ENCODE measurements at regions of chr15 and their contacts with region 1.

Region 1: DNA sequence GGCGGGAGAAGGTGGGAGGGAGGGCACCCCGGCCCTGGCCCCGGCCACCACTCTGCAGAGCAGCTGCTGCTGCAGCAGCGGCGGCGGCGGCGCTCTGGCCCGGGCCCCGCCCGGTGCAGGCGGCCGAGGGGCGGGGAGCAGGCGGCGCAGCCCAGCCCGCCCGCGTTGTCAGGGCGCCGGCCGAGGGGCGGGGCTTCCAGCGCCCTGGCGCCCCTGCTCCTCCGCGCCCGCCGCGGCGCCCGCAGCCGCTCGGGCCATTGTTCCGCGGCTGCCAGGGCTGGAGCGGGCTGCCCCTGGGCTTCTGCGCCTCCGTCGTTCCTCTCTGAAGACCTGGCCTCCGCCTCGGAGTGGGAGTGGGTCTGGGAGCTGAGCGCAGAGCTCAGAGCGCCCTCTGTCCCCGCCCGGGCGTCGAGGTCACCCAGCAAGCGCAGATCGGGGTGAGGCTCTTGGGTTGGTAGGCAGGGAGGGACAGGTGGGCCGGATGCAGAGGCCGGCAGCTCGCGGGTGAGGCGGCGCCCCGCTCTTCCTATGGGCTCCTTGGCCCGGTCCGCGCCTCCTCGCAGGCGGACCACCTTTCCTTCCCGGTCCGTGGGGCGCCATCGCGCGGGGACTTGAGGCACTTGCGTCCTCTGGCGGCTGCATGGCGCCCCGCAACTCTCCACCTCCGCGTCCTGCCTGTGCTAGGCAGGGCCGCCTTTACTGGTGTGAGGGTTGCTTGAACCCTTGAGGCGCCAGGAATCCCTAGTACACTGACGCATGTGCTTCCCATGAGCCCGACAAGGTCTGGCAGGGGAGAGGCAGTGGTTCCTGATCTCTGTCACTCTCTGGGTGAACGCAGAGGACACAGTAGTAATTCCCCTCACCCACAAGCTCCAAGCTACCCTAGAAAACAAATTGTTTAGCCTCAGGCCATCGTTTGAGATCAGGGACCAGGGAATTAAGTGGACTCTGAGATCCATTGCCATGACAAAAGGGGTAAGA is at the start of gene LPCAT4:
- DNase-seq: peak; percentile 87 to 96
- ATAC-seq: peak; percentile 87 to 90
- H3K4me3 ChIP-seq: peak within 1 kb of the TSS; percentile 97
- H3K27ac ChIP-seq: peak within 1 kb of the TSS; percentile 89 to 97
- H3K4me1 ChIP-seq: peaks cover 22% of the 10 kb centered on the region
- CTCF ChIP-seq: peak; percentile 99
- EP300 ChIP-seq: no peak
- POLR2A ChIP-seq: peak; percentile 90
- RAD21 ChIP-seq: peak; percentile 75 to 93
- polyA plus RNA-seq, gene LPCAT4: 42.9 and 50.7 TPM in 2 replicates

Region 2: DNA sequence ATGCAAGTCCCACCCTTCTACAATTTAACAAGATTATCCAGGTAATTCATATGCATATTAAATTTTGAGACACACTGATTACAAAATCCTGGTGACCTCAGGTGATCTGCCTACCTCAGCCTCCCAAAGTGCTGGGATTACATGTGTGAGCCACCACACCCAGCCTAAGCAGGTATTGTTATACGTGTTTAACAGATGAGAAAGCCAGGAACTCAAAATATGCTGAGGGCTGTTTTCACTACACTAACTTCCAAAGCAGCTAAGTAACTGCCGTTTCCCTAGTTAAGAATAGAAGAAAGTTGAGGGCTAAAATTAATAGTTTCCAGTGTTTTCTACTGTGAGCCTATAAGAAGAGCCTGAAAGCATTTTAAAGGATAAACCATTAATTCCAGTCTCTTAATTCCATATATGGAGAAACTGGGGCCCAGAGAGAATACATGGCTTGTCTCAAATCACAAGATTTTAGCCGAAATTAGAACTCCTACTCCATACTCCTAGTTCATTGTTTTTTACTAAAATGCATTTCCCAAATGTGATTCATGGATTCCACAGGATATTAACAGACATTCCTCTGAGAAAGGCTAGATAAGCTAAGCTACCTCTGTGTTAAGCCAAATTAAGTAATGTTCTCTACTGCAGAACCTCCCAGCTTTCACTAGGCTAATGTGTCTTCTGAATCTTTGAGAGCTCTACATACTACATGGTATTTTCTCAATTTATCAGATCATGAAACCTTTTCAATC is 311.4 kb before region 1 on chr15:
- CTCF ChIA-PET with region 1: interaction called, 13 read pairs
- POLR2A ChIA-PET with region 1: no interaction called
- DNase-seq: no peak
- ATAC-seq: peak; percentile 60 to 76; a peak in 5 of 6 replicates
- H3K4me3 ChIP-seq: no peak overlapping the region
- H3K27ac ChIP-seq: no peak overlapping the region
- H3K4me1 ChIP-seq: 0 out of 3 replicates have a peak, but pooled peaks cover 4% of the 10 kb centered on the region
- CTCF ChIP-seq: no peak
- EP300 ChIP-seq: no peak
- POLR2A ChIP-seq: no peak
- RAD21 ChIP-seq: no peak

Region 3: DNA sequence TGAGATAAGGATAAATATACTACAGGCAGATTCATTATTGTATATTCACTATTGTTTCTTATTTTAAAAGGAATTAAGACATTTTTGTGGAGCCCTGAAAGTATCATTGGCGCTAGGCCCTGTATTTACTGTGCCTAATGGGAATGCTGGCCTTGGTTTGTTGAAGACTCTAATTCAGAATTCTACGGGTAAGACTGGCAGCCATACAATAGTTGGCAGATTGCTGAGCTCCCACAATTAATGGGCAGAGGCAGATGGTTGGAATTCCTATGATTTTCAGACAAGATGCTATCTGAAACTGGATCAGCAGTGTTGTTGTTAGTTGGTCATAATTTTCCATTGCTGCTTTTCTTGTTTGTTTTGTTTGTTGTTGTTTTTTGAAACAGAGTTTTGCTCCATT is 250.8 kb before region 1 on chr15:
- CTCF ChIA-PET with region 1: interaction called, 11 read pairs
- POLR2A ChIA-PET with region 1: no interaction called
- DNase-seq: no peak
- ATAC-seq: no peak
- H3K4me3 ChIP-seq: no peak overlapping the region
- H3K27ac ChIP-seq: no peak overlapping the region
- H3K4me1 ChIP-seq: no peaks in the 10 kb centered on the region
- CTCF ChIP-seq: no peak
- EP300 ChIP-seq: no peak
- POLR2A ChIP-seq: no peak
- RAD21 ChIP-seq: no peak

Region 4: GRCh38 chr15:34217587-34218225 is 149.7 kb before region 1 on chr15:
- CTCF ChIA-PET with region 1: interaction called, 23 read pairs
- POLR2A ChIA-PET with region 1: no interaction called
- DNase-seq: no peak
- ATAC-seq: peak in 1 of 2 experiments; percentile 36; a peak in 3 of 6 replicates
- H3K4me3 ChIP-seq: no peak overlapping the region
- H3K27ac ChIP-seq: no peak overlapping the region
- H3K4me1 ChIP-seq: no peaks in the 10 kb centered on the region
- CTCF ChIP-seq: no peak
- EP300 ChIP-seq: no peak
- POLR2A ChIP-seq: no peak
- RAD21 ChIP-seq: no peak

Region 5: DNA sequence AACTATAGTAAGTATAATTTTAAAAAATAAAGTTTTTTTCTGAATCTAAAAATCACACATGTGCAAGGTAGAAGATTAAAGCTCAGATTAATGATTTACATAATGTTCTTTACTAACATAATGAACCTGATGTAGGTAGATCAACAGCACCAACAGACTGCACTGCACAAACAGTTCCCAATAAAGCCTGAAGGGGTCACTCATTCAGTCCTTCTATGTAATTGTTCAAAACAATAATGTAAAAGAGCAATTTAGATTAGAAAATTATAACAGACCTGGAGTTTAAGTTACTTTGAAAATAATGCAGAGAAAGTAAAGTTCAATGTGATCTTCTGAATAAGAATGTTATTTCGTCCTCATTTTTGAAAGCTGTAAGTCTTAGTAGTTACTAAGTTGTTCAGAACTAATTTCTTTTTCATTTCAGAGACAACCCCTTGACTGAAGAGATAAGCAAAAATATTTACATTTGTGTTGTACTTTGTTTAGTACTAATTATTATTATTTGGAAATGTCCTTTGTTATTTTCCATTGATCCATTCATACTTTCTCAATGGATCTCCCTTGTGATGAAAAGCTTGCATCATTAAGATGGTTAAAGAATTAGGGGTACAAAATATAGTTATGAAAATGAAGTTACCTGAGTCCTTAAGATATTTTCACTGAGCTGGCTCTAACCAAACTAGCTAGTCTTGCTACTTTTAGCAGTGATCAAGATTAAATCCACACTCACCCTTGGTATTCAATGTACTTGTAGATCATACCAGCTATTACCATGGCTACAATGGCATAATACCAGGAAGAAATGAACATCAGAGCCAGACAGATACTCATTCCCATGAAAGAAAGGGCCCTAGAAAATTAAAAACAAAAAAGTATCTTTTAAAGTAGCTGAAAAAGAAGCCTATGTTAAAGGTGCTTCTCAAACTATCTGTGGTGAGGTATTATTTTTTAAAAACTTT is 125.7 kb before region 1 on chr15:
- CTCF ChIA-PET with region 1: interaction called, 33 read pairs
- POLR2A ChIA-PET with region 1: no interaction called
- DNase-seq: peak; percentile 58 to 75
- ATAC-seq: peak; percentile 65 to 90; a peak in 3 of 6 replicates
- H3K4me3 ChIP-seq: no peak overlapping the region
- H3K27ac ChIP-seq: no peak overlapping the region
- H3K4me1 ChIP-seq: peaks cover 17% of the 10 kb centered on the region; the same call in 2 of the 3 replicates
- CTCF ChIP-seq: peak; percentile 67
- EP300 ChIP-seq: no peak
- POLR2A ChIP-seq: no peak
- RAD21 ChIP-seq: peak; percentile 62 to 66

Region 6: GRCh38 chr15:34327906-34328305 is 39.5 kb before region 1 on chr15:
- CTCF ChIA-PET with region 1: interaction called, 28 read pairs
- POLR2A ChIA-PET with region 1: no interaction called
- DNase-seq: no peak
- ATAC-seq: no peak
- H3K4me3 ChIP-seq: no peak overlapping the region
- H3K27ac ChIP-seq: no peak overlapping the region
- H3K4me1 ChIP-seq: no peaks in the 10 kb centered on the region
- CTCF ChIP-seq: no peak
- EP300 ChIP-seq: no peak
- POLR2A ChIP-seq: no peak
- RAD21 ChIP-seq: no peak

Region 7: DNA sequence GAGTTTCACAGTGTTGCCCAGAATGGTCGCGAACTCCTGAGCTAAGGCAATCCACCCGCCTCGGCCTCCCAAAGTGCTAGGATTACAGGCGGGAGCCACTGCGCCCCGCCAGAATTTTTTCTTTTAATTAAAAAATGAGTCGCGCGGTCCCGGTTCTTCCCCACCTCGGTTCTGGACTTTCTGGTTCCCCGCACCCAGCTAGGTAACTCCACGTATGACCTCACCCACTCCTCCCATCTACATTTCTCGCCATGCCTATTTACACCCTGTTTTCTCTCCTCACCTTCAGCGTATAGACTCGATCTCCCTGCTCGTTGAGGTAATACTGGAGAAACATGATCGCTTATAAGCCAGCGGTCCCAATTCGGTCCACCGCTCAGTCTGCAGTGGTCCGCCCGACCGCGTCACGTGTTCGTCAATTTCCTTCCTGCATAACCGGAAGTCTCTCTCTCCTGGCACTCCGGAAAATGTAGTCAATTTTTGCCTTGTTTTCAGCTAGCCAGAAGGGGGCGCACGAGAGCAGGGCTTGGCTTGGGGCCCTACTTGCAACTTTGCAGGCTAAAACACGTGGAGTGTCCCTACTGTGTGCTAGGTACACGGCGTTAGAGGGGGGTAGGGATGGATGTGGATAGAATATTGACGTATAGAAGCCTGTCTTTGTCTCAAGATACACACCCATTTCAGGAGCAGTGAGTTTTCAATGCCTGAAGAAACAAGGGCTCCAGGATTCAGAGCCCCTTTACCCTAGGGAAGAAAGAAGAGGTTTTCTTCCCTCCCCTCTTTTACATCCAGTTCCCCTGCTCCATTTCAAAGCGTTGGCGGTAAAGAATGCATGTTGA is 24.4 kb before region 1 on chr15 and contains the starts of genes NOP10 and NUTM1:
- CTCF ChIA-PET with region 1: interaction called, 80 read pairs
- POLR2A ChIA-PET with region 1: interaction called, 20 read pairs
- DNase-seq: peak; percentile 83 to 96
- ATAC-seq: peak; percentile 93 to 94
- H3K4me3 ChIP-seq: peak within 1 kb of the TSS; percentile 68
- H3K27ac ChIP-seq: peak within 1 kb of the TSS; percentile 82 to 88
- H3K4me1 ChIP-seq: peaks cover 15% of the 10 kb centered on the region; the same call in 2 of the 3 replicates
- CTCF ChIP-seq: peak; percentile 99
- EP300 ChIP-seq: no peak
- POLR2A ChIP-seq: peak; percentile 96
- RAD21 ChIP-seq: peak; percentile 84 to 87
- polyA plus RNA-seq, gene NOP10: 451 and 688 TPM in 2 replicates
- polyA plus RNA-seq, gene NUTM1: not detected in 2 replicates

Region 8: GRCh38 chr15:34470091-34470490 is 102.7 kb after region 1 on chr15:
- CTCF ChIA-PET with region 1: no interaction called
- POLR2A ChIA-PET with region 1: no interaction called
- DNase-seq: no peak
- ATAC-seq: no peak
- H3K4me3 ChIP-seq: no peak overlapping the region
- H3K27ac ChIP-seq: no peak overlapping the region
- H3K4me1 ChIP-seq: no peaks in the 10 kb centered on the region
- CTCF ChIP-seq: no peak
- EP300 ChIP-seq: no peak
- POLR2A ChIP-seq: no peak
- RAD21 ChIP-seq: no peak

Measured in A549 (cell line).